PC-9 (cell line): ENCODE measurements at regions of chr12 and their contacts with region 1.

Region 1: DNA sequence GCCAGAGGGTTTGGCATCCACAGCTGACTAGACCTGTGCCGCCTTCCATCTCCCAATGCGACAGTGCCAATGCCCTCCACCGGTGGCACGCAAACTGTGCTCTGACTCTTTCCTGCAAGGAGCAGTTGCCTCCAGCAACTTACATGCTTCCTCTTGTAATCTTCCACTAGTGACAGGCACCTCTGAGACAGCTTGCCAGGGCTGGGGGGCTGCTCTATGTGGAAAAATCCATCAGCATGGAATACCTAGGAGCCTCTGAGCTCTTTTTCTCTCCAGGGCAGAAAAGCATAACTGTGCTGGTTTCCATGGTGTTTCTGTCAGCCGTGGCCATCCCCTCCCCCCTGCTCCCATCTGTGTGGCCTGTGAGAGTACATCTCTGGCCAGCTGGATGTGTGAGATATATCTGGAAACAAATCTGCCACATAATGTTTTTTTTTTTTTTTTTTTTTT is 110.6 kb downstream of the MYRFL start:
- DNase-seq: peak in 1 of 2 experiments; percentile 5
- H3K4me3 ChIP-seq: no peak overlapping the region
- H3K27ac ChIP-seq: peak overlapping the region; percentile 24; the same call in 1 of the 2 replicates
- H3K4me1 ChIP-seq: peaks cover 21% of the 10 kb centered on the region
- H3K27me3 ChIP-seq: no peaks in the 10 kb centered on the region
- CTCF ChIP-seq: no peak

Region 2: DNA sequence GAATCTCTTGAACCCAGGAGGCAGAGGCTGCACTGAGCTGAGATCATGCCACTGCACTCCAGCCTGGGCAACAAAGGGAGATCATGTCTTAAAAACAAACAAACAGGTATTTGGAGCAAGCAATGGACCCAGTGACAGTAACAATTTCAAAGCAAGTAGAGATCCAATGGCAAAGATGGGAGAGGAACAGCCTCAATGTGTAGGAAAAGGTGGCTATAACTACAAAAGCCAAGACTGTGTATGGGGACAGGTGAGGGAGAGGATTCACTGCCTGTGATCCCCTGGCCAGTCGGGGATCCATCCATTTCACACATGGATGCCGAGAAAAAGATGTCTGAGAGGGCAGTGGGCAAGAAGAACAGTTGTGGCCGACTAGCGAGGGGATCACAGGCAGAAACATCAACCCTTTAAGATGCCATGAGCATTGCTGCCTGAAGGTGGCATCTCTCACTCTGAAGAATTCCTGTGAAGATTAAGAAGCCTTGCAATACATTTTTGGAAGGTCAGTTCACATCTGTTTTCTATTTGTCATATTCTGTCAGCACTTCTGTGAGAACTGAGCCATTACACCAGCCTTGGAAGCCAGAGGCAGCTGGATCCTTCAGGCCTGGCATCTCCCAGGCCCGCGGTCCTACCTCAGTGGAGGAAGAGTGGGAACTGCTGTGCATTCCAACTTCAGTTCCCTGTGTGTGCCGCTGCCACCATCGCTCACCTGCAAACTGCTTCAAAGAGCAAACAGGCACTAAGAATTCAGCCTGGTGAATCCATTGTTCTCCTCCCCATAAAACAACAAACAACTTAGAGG is 520.0 kb before region 1 on chr12:
- CTCF ChIA-PET with region 1: no interaction called
- POLR2A ChIA-PET with region 1: no interaction called
- intact Hi-C with region 1: no loop called
- DNase-seq: peak in 1 of 2 experiments; percentile 15
- H3K4me3 ChIP-seq: no peak overlapping the region
- H3K27ac ChIP-seq: no peak overlapping the region
- H3K4me1 ChIP-seq: no peaks in the 10 kb centered on the region
- H3K27me3 ChIP-seq: no peaks in the 10 kb centered on the region
- CTCF ChIP-seq: peak; percentile 67

Region 3: GRCh38 chr12:69630191-69630590 is 305.5 kb before region 1 on chr12:
- CTCF ChIA-PET with region 1: no interaction called
- POLR2A ChIA-PET with region 1: no interaction called
- intact Hi-C with region 1: no loop called
- DNase-seq: no peak
- H3K4me3 ChIP-seq: no peak overlapping the region
- H3K27ac ChIP-seq: no peak overlapping the region
- H3K4me1 ChIP-seq: no peaks in the 10 kb centered on the region
- H3K27me3 ChIP-seq: no peaks in the 10 kb centered on the region
- CTCF ChIP-seq: peak; percentile 43; the same call in 1 of the 2 replicates

Region 4: DNA sequence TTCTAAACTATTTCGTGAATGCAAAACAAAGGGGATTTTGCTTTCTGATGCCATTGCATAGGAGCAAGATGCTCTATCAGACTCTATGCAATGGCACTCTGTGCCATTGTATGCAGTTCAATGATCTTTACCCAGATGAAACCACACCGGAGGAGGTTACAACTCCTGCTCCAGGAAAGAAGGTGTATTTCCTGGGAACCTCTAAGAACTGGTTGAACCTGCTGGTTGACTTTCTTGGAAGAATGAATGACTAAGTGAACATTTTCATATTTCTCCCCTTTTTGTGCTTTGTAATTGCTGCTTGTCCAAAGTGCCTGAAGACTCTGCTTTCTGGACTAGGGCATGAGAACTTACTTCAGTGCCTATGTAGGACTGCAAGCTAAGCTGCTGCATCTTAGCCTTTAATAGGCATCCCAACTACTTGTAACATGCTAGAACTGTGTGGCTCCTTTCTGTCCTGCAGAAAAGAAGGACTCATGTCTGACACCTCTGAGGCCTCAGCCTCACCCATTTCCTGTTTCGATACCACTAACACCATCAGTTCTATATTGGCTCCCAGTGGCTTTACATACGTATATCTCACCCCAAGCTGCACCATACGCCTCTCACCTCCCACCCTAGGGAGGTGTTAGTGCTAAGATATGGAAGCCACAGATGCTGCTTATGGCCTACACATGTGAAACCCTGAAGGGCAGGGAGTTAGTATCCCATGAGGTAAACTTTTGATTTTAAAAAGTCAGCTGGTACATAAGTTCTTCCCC is 114.1 kb after region 1 on chr12:
- CTCF ChIA-PET with region 1: no interaction called
- POLR2A ChIA-PET with region 1: no interaction called
- intact Hi-C with region 1: loop called (anchors 5 kb)
- DNase-seq: peak; percentile 49 to 88
- H3K4me3 ChIP-seq: peak overlapping the region; percentile 15; the same call in 1 of the 2 replicates
- H3K27ac ChIP-seq: peak overlapping the region; percentile 83
- H3K4me1 ChIP-seq: peaks cover 47% of the 10 kb centered on the region
- H3K27me3 ChIP-seq: no peaks in the 10 kb centered on the region
- CTCF ChIP-seq: no peak